Dorsolateral prefrontal cortex (tissue), 120 donors: ENCODE measurements at regions of chr19 and their contacts with region 1.

Region 1: GRCh38 chr19:53467485-53468262 is at the start of gene ZNF813:
- DNase-seq: peak; percentile 88 to 96 (median 94)
- H3K4me3 ChIP-seq: peak within 1 kb of the TSS; percentile 47 to 83 (median 70)
- H3K27ac ChIP-seq: peak within 1 kb of the TSS in 12 of 59 donors; percentile 13 to 79 (median 26)
- H3K27me3 ChIP-seq: peaks cover 0 to 5% (median 0%) of the 10 kb centered on the region in 45 donors
- CTCF ChIP-seq: peak in 2 of 56 donors; percentile 23 to 27
- total RNA-seq, gene ZNF813: 0.55 to 6.6 (median 1.5) TPM

Region 2: DNA sequence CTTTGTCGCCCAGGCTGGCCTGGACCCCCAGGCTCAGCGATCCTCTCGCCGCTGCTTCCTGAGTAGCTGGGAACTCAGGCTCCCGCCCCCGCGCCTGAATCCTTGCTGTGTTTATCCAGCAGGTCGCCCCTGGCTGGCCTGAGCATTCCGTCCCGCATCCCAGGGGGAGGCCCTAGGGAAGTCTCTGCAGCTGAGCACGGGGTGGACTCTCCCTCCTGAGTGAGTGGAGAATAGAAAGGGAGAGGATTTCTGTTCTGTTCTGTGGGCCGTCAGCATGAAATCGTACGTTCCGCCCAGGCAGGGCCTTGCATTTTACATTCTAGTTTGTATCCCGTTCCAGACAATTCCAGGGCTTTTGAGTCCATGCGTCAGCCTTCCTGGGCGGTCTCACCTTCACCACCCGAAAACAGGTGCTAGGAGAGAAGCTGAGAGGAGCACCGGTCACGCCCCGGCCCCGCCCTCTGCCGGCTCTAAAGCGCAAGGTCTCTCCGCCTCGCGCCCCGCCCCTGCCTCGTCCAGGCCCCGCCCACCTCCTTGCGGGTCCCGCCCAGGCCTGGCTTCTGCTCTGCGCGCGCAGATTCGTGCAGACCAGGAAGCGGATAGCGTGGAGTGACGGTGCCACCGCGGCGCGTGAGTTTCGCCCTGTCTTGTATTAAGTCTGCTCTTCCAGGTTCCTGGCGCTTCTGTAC is 36.1 kb before region 1 on chr19 and contains the start of gene ZNF761:
- intact Hi-C with region 1: loop called (anchors 2 to 5 kb)
- DNase-seq: peak; percentile 90 to 97 (median 94)
- H3K4me3 ChIP-seq: peak within 1 kb of the TSS; percentile 47 to 89 (median 73)
- H3K27ac ChIP-seq: peak within 1 kb of the TSS in 48 of 59 donors; percentile 11 to 84 (median 64)
- H3K27me3 ChIP-seq: no peaks in the 10 kb centered on the region
- CTCF ChIP-seq: peak in 51 of 56 donors; percentile 13 to 74 (median 47)
- total RNA-seq, gene ZNF761: 4.5 to 17.6 (median 8.0) TPM